Mammary epithelial cell (primary cell): ENCODE measurements at regions of chr16 and their contacts with region 1.

Region 1: DNA sequence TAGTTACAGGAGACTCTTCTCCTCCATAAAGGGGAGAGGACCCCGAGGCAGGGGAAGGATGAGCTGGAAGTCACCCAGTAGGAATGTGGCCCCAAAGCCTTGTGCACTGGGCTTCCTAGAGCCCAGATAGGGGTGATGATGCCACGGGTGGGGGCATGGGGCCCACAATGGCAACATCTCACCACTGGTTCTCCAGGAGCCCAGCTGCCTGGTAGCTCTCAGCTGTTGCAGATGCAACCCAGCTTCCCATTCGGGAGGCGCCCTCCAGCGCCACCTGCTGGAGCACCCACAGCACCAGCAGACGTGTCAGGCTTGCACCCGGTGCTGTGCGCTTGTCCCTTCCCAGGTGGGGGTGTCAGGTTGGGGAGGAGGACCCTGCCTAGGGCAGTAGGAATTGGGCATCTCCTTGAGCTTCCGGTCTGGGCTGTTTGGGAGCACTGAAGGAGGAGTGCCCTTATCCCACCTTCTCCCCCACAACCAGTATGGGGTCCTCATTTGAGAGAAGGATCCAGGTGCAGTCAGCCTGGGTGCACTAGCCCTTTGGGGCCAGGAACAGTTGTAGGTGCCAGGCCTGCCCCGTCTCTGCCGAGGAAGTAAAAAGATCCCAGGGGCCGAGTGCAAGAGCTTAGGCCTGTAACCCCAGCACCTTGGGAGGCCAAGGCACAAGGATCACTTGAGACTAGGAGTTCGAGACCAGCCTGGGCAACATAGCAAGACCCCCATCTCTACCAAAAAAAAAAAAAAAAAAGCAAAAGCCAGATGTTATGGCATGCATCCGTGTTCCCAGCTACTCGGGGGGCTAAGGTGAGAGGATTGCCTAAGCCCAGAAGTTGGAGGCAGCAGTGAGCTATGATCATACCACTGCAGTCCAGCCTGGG is 14.4 kb downstream of the CDIPT start:
- DNase-seq: peak; percentile 39
- H3K4me3 ChIP-seq: no peak overlapping the region
- H3K27ac ChIP-seq: no peak overlapping the region
- H3K4me1 ChIP-seq: no peaks in the 10 kb centered on the region
- H3K27me3 ChIP-seq: no peaks in the 10 kb centered on the region
- CTCF ChIP-seq: peak; percentile 86 to 89

Region 2: GRCh38 chr16:30010844-30011713 is 162.4 kb after region 1 on chr16 and contains the start of gene DOC2A:
- CTCF ChIA-PET with region 1: interaction called, 10 read pairs
- dilution Hi-C with region 1: no loop called
- in situ Hi-C with region 1: no loop called
- intact Hi-C with region 1: no loop called
- DNase-seq: no peak
- H3K4me3 ChIP-seq: peak within 1 kb of the TSS; percentile 29 to 38 (median 36)
- H3K27ac ChIP-seq: no peak within 1 kb of the TSS
- H3K4me1 ChIP-seq: peaks cover 7% of the 10 kb centered on the region
- H3K27me3 ChIP-seq: peaks cover 15% of the 10 kb centered on the region
- CTCF ChIP-seq: no peak
- total RNA-seq, gene DOC2A: 0.89 TPM in 1 of 2 donors, not detected in the other

Region 3: DNA sequence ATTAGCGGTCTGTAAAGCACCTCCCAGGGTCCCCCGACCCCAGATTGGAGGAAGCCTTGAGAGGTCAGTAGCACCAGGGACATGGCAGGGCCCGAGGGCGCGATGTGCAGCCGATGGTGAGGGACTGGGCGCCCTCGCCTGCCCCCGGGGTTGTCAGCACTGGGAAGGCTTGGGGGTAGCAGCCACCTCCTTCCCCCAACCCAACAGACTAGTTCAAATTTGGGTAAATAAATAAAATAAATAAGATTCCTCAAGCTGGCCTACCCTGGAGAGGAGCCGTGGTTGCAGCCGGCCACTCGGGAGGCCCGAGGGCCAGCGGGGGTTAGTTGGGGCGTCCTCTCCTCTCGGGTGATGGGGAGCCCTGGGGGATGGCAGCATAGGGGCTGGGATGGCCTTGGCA is 175.8 kb after region 1 on chr16:
- CTCF ChIA-PET with region 1: no interaction called
- dilution Hi-C with region 1: no loop called
- in situ Hi-C with region 1: no loop called
- intact Hi-C with region 1: loop called (anchors 5 kb)
- DNase-seq: no peak
- H3K4me3 ChIP-seq: no peak overlapping the region
- H3K27ac ChIP-seq: no peak overlapping the region
- H3K4me1 ChIP-seq: peaks cover 5% of the 10 kb centered on the region
- H3K27me3 ChIP-seq: no peaks in the 10 kb centered on the region
- CTCF ChIP-seq: no peak